ENCODE measurements at regions of chr6 and their contacts with region 1.

Region 1: DNA sequence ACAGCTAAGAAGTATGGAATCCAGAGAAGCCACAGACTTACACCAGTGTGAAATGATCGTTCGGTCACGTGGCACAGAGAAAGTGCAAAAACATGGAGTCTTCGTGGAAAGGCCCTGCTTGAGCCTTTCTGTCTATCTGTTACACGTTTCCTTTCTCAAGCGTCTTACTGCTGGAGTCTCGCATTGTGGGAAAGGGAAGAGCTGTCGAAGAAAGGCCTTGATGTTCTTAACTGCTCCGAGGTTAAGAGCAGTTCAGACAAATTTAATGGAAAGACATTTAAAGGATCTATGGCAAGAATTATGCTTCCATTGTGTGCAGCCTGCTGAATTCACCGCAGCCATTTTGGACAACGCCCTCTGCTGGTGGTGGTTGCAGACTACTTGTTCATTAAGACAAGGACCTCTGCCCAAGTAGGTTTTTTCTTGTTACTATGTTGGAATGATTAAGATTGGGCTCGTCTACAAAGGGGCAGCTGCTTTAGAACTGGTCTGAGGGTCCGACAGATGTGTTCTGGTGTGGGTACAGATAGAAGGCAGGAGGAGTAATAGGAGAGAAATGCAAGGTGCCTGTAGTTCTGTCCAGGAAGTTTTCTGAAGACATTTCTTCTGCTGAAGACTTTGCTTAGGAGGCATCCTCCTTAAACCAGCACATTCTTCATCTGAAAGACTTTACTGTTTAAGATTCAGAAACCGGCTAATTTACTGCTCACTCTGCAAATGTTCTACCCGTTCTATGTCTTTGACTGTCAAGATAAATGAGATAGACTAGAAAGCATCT is 24.7 kb upstream of the CCN6 start:
- DNase-seq: peak; percentile 65
- H3K4me3 Mint-ChIP-seq: no peak overlapping the region
- H3K27ac Mint-ChIP-seq: peak overlapping the region; percentile 97
- H3K4me1 Mint-ChIP-seq: peaks cover 60% of the 10 kb centered on the region
- H3K27me3 Mint-ChIP-seq: no peaks in the 10 kb centered on the region

Region 2: DNA sequence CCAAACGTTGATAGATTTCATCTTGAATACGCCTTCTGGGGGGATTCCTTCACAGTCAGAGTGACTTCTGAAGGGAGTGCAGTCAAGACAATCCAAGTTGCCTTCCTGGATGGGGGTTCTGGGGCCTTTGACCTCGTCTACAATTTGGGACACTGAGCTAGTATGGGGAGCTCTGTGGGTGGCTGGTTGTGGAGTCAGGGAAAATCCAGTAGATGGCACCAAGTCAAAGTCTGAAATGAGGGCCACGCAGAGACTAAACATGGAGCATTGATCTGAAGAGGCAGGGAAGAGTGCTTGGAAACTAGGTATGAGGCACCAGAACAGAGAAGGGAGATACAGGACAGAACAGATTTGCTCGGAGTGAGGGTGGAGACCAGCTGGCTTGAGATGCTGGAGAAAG is 18.9 kb before region 1 on chr6:
- CTCF ChIA-PET with region 1: interaction called, 11 read pairs
- POLR2A ChIA-PET with region 1: no interaction called
- DNase-seq: peak; percentile 30
- H3K4me3 Mint-ChIP-seq: no peak overlapping the region
- H3K27ac Mint-ChIP-seq: no peak overlapping the region
- H3K4me1 Mint-ChIP-seq: peaks cover 1% of the 10 kb centered on the region
- H3K27me3 Mint-ChIP-seq: no peaks in the 10 kb centered on the region

Region 3: GRCh38 chr6:112018619-112019416 is 10.4 kb before region 1 on chr6:
- CTCF ChIA-PET with region 1: interaction called, 34 read pairs
- POLR2A ChIA-PET with region 1: no interaction called
- DNase-seq: no peak
- H3K4me3 Mint-ChIP-seq: no peak overlapping the region
- H3K27ac Mint-ChIP-seq: peak overlapping the region; percentile 16
- H3K4me1 Mint-ChIP-seq: peaks cover 42% of the 10 kb centered on the region
- H3K27me3 Mint-ChIP-seq: no peaks in the 10 kb centered on the region